Kidney (tissue), 22 donors: ENCODE measurements at regions of chr3 and their contacts with region 1.

Region 1: DNA sequence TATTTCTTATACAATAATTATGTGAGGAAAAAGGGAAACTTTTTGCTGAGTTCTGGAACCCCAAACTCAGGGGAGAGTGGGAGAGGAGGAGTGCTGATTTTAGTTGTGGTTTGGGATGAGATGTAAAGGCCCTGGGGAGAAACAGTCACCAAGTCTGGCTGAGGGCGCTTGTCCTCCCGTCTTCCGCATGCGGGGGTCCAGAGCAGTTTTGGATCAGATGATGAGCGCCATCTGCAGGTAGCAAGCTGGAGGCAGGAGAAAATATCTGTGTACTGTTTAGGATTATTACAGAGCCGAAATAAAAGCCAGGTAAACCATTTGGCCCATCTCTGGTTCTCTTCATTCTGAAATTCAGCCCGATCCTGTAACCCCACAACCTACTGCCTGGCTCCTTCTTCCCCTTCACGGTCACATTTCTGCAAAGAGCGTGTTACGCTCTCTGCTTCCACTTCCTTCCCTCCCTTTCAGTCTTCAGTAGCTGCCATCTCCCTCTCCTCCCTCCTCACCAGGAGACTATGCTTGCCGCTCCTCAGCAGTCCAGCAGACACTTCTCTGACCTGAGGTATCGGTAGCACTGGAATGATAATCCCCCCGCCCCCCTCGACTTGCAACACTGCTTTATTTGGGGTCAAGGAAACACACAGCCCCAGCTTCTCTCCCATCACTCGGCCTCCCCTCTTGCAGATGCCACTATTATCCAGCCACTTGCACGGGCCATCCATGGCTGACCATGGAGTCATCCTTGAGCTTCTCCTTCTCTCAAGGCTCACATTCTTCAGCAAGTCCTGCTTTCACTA is 1.4 kb upstream of the PARP14 start:
- DNase-seq: peak; percentile 83 to 93 (median 85)
- H3K4me3 ChIP-seq: peak overlapping the region; percentile 46 to 85 (median 48)
- H3K27ac ChIP-seq: peak overlapping the region; percentile 94 to 95
- H3K4me1 ChIP-seq: peaks cover 0 to 14% (median 0%) of the 10 kb centered on the region in 3 donors
- H3K27me3 ChIP-seq: no peaks in the 10 kb centered on the region
- CTCF ChIP-seq: peak; percentile 85

Region 2: GRCh38 chr3:122392868-122393844 is 286.1 kb before region 1 on chr3:
- intact Hi-C with region 1: loop called (anchors 10 kb)
- DNase-seq: peak in 2 of 5 donors; percentile 31 to 61
- H3K4me3 ChIP-seq: no peak overlapping the region
- H3K27ac ChIP-seq: no peak overlapping the region
- H3K4me1 ChIP-seq: peaks cover 0 to 5% (median 2%) of the 10 kb centered on the region in 3 donors
- H3K27me3 ChIP-seq: no peaks in the 10 kb centered on the region
- CTCF ChIP-seq: peak; percentile 72

Region 3: GRCh38 chr3:122493296-122493695 is 186.0 kb before region 1 on chr3:
- intact Hi-C with region 1: no loop called
- DNase-seq: no peak
- H3K4me3 ChIP-seq: no peak overlapping the region
- H3K27ac ChIP-seq: no peak overlapping the region
- H3K4me1 ChIP-seq: no peaks in the 10 kb centered on the region
- H3K27me3 ChIP-seq: no peaks in the 10 kb centered on the region
- CTCF ChIP-seq: no peak

Region 4: GRCh38 chr3:122564155-122564912 is 114.9 kb before region 1 on chr3 and contains the starts of genes DTX3L and PARP9:
- intact Hi-C with region 1: loop called (anchors 5 kb)
- DNase-seq: peak; percentile 83 to 95 (median 87)
- H3K4me3 ChIP-seq: peak within 1 kb of the TSS; percentile 71 to 77 (median 73)
- H3K27ac ChIP-seq: peak within 1 kb of the TSS; percentile 90 to 98
- H3K4me1 ChIP-seq: peaks cover 0 to 11% (median 9%) of the 10 kb centered on the region in 3 donors
- H3K27me3 ChIP-seq: no peaks in the 10 kb centered on the region
- CTCF ChIP-seq: no peak
- total RNA-seq, gene DTX3L: 58.0 TPM
- total RNA-seq, gene PARP9: 54.0 TPM

Region 5: DNA sequence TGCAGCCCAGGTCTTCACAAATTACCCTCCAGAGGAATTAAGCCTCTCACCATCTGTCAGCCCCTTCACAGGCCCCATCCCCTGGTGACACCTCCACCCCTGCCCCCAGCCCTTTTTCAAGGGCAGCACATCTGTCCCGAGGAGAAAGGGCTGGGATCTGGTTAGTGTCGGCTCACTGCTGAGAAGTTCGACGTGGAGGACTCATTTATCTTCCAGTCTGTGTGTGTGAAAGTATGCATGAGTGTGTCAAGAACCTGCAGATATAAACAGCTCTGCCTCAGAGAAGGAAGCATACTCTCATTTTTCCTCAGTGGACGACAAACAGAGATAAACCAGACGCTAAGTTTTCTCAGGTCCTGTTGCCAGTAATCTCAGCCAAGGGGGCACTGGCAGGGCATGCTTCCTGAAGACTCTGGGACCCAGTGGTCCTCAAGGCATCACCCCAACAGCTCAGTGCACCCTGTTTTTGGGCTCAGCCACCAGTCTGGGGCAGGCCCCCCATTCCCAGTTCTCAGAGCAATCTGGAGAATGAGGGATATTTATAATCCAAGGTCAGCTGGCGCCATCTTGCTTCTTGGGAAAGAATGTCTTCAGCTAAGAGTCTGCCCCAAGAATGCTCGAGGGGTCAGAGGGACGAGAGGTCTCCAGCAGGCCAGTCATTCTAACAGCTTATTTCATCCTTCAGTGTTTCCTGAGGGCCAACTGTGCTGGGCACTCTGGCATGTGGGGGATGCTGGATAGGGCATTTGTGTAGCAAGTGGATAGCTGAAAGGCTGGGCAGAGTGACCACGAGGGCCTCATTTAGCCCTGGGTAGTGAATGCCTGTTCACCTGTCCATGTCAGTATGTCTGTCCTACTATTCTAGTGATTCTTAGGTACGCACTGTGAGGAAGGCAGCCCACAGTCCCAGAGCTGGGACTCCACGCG is 696.0 kb after region 1 on chr3:
- intact Hi-C with region 1: no loop called
- DNase-seq: peak in 2 of 5 donors; percentile 23 to 25
- H3K4me3 ChIP-seq: no peak overlapping the region
- H3K27ac ChIP-seq: no peak overlapping the region
- H3K4me1 ChIP-seq: peaks cover 0 to 16% (median 0%) of the 10 kb centered on the region in 3 donors
- H3K27me3 ChIP-seq: no peaks in the 10 kb centered on the region
- CTCF ChIP-seq: no peak